Ovary (tissue), 10 donors: ENCODE measurements at regions of chr21 and their contacts with region 1.

Region 1: DNA sequence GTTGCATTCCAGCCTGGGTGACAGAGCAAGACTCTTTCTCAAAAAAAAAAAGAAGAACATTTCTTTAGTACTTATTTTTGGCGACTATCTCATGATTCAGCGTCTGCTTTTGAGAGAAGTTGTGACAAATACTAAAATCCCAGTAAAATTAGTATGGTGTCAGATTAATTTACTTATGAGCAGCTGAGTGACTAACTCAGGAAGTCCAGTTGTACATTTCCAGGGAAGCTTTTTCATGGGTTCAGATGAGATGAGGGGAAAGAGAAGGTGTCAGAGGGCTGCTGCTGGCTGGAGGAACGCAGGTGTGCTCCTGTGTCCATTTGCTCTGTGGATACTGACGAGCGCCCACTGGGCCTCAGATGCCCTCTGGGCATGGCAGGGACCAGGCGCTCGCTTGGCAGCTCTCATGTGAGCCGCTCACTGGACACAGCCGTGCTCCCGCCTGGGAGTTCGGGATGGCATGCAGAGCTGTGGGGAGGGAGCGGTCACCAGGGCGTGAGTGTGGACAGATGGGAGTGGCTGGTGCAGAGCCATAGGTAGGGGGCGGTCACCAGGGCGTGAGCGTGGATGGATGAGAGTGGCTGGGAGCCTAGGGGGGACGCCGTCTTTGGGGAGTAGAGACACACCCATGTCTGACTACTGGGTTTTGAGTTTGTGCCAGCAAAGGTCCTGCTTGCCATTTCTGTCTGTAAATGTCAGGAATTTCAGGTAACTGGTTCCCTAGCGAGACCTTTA is 55.0 kb downstream of the ADARB1 start:
- DNase-seq: peak; percentile 36 to 57 (median 53)
- H3K4me3 ChIP-seq: no peak overlapping the region
- H3K27ac ChIP-seq: peak overlapping the region; percentile 57 to 83
- H3K4me1 ChIP-seq: peaks cover 15% of the 10 kb centered on the region
- H3K27me3 ChIP-seq: no peaks in the 10 kb centered on the region
- CTCF ChIP-seq: no peak
- EP300 ChIP-seq: no peak
- POLR2A ChIP-seq: no peak

Region 2: GRCh38 chr21:44752634-44753291 is 376.6 kb before region 1 on chr21:
- intact Hi-C with region 1: no loop called
- DNase-seq: no peak
- H3K4me3 ChIP-seq: no peak overlapping the region
- H3K27ac ChIP-seq: no peak overlapping the region
- H3K4me1 ChIP-seq: no peaks in the 10 kb centered on the region
- H3K27me3 ChIP-seq: no peaks in the 10 kb centered on the region
- CTCF ChIP-seq: no peak
- EP300 ChIP-seq: no peak
- POLR2A ChIP-seq: no peak

Region 3: GRCh38 chr21:45074048-45074817 is 55.1 kb before region 1 on chr21 and contains the start of gene ADARB1:
- intact Hi-C with region 1: loop called in 2 of 4 experiments (anchors 10 kb)
- DNase-seq: peak; percentile 54 to 80 (median 75)
- H3K4me3 ChIP-seq: peak within 1 kb of the TSS; percentile 93
- H3K27ac ChIP-seq: peak within 1 kb of the TSS; percentile 88 to 97
- H3K4me1 ChIP-seq: peaks cover 3% of the 10 kb centered on the region
- H3K27me3 ChIP-seq: no peaks in the 10 kb centered on the region
- CTCF ChIP-seq: no peak
- EP300 ChIP-seq: no peak
- POLR2A ChIP-seq: peak; percentile 59
- total RNA-seq, gene ADARB1: 6.4 to 23.7 (median 16.3) TPM

Region 4: DNA sequence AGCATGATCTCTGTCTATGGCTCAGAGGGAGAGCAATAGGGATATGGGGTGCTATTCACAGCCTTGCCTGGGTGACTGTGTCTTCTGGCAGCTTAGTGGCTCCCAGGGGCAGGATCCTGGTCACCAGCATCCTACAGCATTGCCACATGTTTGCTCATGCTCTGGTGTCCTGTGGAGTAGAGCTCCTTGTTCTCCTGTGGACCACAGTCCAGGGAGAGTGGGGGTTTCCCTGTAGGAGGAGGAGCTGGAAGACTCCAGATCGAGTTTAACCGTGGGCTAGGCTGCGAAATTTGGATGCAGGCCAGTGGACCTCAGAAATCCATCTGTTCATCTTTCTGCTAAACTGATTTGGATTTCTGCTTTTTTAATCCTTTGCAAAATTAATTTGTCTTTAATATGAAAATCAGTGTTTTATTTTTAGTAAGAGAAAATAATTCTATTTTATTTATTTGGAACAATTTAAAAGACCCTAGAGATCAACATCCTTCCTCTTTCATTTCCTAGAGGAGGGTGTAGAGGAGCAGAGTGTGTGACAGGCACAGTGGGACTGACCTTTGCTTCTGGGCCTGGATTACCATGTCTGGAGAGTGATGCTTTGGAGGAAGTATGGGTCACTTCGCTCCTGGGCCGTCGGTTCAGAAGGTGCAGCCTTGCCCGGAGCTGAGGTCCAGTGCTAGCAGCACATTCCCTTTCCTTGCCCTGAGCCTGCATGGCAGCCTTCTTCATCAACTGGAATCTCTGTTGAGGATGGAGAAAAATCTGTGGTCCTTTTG is 37.6 kb before region 1 on chr21:
- intact Hi-C with region 1: loop called in 1 of 4 experiments (anchors 5 kb)
- DNase-seq: no peak
- H3K4me3 ChIP-seq: no peak overlapping the region
- H3K27ac ChIP-seq: no peak overlapping the region
- H3K4me1 ChIP-seq: no peaks in the 10 kb centered on the region
- H3K27me3 ChIP-seq: no peaks in the 10 kb centered on the region
- CTCF ChIP-seq: no peak
- EP300 ChIP-seq: no peak
- POLR2A ChIP-seq: no peak

Region 5: DNA sequence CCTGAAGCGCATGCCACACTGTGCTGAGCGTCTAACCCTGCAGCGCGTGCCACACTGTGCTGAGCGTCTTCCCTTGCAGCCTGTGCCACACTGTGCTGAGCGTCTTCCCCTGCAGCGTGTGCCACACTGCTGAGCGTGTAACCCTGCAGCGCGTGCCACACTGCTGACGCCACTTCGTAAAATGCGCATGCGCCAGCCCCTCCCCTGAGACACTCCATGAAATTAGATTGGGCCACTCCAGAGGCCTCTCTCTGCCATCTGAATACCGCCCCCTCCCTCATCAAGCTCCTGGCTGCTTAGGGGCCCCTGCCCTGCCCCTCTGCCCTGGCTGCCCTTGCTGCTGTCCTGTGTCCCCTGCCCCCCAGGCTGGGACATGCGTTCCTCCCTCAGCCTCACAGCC is 73.5 kb after region 1 on chr21:
- intact Hi-C with region 1: no loop called
- DNase-seq: no peak
- H3K4me3 ChIP-seq: no peak overlapping the region
- H3K27ac ChIP-seq: no peak overlapping the region
- H3K4me1 ChIP-seq: no peaks in the 10 kb centered on the region
- H3K27me3 ChIP-seq: no peaks in the 10 kb centered on the region
- CTCF ChIP-seq: no peak
- EP300 ChIP-seq: no peak
- POLR2A ChIP-seq: no peak